Ovary (tissue), 10 donors: ENCODE measurements at regions of chr19 and their contacts with region 1.

Region 1: DNA sequence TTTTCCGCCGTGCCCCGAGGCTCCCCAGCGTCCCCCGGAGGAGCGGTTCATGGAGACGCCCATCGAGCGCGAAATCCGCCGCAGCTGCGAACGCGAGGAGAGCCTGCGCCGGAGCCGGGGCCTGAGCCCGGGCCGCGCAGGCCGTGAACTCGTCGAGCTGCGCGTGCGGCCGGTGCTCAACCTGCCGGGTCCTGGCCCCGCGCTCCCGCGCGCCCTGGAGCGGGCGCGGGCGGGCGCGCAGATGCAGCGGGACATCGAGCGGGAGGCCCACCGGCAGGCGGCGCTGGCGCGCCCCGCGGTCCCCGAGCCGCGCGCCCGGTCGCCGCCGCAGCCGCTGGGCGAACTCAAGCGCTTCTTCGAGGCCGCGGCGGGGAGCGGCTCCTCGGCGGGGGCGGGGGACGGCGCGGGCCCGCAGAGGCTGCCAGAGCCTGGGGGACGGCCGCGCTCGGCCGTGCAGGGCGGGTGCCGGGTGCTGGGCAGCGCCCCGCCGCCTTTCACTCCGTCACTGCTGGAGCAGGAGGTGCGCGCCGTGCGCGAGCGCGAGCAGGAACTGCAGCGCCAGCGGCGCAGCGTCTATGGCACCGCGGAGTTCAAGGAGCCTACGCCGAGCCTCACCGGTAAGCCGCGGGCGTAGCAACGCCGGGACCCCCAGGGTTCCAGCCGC is 807 bp downstream of the MISP3 start:
- DNase-seq: peak; percentile 57 to 83 (median 72)
- H3K4me3 ChIP-seq: peak overlapping the region; percentile 58
- H3K27ac ChIP-seq: peak overlapping the region in 1 of 2 donors; percentile 44
- H3K4me1 ChIP-seq: peaks cover 7% of the 10 kb centered on the region
- H3K27me3 ChIP-seq: no peaks in the 10 kb centered on the region
- CTCF ChIP-seq: peak; percentile 10 to 84 (median 84)
- EP300 ChIP-seq: no peak
- POLR2A ChIP-seq: no peak

Region 2: DNA sequence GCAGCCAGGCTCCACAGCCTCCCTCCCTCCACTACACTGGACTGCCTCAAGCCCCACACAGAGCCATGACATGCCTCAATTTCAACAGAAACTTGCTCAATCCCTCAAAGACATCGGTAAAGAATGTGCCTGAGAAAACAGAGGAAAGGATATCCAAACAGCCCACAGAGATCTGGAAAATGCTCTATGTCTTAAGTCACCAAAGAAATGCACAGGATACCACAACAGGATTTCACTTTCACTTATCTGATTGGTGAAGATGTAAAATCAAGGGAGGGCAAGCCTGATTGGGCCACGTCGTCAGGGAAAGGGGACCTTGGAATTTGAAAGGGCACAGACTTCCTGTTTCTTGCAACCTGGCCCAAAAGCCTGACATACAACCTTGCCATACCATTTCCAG is 581.3 kb before region 1 on chr19:
- intact Hi-C with region 1: no loop called
- DNase-seq: no peak
- H3K4me3 ChIP-seq: no peak overlapping the region
- H3K27ac ChIP-seq: no peak overlapping the region
- H3K4me1 ChIP-seq: no peaks in the 10 kb centered on the region
- H3K27me3 ChIP-seq: no peaks in the 10 kb centered on the region
- CTCF ChIP-seq: no peak
- EP300 ChIP-seq: no peak
- POLR2A ChIP-seq: no peak

Region 3: DNA sequence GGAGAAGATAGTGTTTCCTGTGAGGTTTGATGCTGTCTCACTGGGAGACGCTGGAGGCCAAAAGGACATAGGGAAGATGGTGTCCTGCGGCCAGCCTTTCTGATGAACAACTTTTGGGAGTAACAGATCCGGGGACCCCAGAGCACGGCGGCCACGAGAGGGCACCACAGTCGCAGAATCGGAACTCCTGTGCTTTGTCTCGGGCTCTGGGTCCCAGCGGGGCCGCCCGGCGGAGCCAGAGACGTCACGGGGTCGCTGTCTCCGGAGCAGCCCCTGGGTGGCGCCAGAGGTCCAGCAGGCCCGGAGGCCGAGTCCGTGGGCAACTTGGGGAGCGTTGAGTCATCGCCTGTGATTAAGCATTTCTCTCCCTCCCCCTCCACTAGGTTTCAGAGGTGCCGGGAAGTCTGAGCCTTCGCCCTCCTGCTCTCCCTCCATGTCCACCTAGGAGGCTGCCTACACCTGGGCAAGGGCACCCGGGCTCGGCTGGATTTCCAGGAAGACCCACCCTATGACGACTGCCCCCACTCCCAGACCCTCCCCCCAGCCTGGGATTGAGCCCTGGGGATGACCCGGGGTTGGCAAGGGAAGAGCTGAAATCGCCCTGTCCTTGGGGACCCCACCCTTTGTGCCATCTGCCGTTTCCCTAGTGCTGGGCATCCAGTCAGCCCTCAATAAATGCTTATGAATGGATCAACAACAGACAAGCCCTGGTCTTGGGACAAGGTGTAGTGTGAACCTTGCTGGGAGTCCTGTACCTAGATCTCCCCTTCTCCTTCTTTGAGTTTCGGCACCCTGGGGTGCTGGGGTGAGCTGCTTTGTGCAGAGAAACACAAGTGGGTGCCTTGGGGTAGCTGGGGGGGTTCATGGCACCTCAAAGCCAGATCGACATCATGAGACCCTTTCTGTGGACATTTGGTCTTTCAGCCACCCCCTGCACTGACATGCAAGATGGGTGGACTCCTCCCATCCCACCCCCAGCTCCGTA is 193.0 kb before region 1 on chr19:
- intact Hi-C with region 1: loop called (anchors 2 to 5 kb)
- DNase-seq: peak; percentile 93 to 98 (median 98)
- H3K4me3 ChIP-seq: no peak overlapping the region
- H3K27ac ChIP-seq: peak overlapping the region; percentile 3 to 60
- H3K4me1 ChIP-seq: peaks cover 7% of the 10 kb centered on the region
- H3K27me3 ChIP-seq: no peaks in the 10 kb centered on the region
- CTCF ChIP-seq: peak; percentile 94 to 99 (median 99)
- EP300 ChIP-seq: no peak
- POLR2A ChIP-seq: peak; percentile 25

Region 4: DNA sequence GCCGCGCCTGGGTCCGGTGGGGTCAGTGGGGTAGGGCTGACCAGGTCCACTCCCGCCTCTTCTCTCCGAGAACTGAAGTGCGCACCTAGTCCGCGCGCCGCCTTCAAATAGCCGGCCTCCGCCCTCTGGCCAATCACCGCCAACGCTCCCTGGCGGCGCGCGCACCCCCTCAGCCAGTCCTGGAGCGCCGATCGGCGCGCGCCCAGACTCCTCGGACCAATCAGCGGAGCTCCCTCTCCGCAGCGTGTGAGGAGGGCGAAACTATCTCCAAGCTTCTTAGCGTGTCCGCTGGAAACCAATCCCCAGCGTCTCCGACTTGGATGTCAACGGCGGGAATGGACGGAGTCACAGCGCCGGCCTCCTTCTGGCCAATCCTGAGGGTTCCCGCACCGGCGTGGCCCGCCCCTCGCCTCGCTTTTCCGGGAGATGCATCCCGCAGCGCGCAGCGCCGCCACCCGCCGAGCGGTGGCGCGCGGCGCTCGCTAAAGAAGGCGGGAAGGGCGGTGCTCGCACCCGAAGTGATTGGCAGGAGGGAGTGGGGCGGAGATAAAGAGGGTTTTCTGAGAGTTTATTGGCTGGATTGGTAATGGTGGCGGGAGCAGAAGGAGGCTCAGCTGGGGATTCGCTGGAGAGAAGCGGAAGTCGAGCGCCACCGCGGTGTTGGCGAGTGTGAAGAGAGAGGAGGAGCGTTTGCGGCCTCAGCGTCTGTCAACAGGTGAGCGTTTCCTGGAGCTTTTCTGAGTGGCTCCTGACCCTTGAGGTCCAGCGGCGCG is 63.3 kb after region 1 on chr19 and contains the start of gene ASF1B:
- intact Hi-C with region 1: loop called in 2 of 4 experiments (anchors 5 kb)
- DNase-seq: peak; percentile 98 to 99 (median 99)
- H3K4me3 ChIP-seq: peak within 1 kb of the TSS; percentile 51
- H3K27ac ChIP-seq: peak within 1 kb of the TSS in 1 of 2 donors; percentile 92
- H3K4me1 ChIP-seq: no peaks in the 10 kb centered on the region
- H3K27me3 ChIP-seq: no peaks in the 10 kb centered on the region
- CTCF ChIP-seq: peak; percentile 72 to 98 (median 96)
- EP300 ChIP-seq: peak; percentile 44
- POLR2A ChIP-seq: peak; percentile 56
- total RNA-seq, gene ASF1B: 0.12 to 4.9 (median 1.0) TPM

Region 5: DNA sequence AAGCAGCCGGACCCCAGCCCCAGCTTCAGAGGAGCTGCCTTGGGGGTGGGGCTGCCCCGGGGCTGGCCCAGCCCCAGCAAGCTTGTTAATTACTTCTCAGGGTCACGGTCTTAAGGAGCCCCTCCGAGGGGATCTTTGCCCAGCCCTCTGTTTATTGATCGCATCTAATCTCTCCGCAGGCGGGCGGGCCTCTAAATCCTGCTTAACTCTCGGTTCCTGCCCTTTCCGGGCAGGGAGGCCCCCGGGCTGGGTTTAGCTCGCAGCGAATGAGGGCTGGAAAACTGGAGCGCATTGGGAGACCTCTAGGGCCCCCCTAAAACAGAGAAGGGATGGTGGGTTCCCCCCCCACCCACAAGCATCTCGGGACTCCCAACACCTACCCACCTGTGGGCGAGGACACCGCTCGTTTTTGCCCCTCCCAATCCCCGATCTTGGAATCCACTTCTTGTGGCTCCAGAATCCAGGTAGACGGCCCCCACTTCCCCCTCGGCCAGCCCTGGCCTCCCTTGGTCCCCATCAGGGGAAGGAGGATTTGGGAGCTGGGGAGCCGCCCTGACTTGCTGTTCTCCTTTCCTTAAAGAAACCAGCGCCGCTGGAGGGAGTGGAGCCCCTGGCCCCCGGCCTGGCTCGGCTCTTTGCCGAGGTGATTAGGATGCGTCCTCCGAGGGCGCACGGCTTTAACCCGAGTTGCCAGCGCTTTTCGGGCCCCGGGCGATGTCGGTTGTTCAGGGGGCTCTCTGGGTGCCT is 192.1 kb after region 1 on chr19:
- intact Hi-C with region 1: no loop called
- DNase-seq: peak in 2 of 5 donors; percentile 28 to 35
- H3K4me3 ChIP-seq: peak overlapping the region; percentile 10
- H3K27ac ChIP-seq: no peak overlapping the region
- H3K4me1 ChIP-seq: no peaks in the 10 kb centered on the region
- H3K27me3 ChIP-seq: no peaks in the 10 kb centered on the region
- CTCF ChIP-seq: no peak
- EP300 ChIP-seq: no peak
- POLR2A ChIP-seq: no peak